Endothelial cell of umbilical vein (primary cell): ENCODE measurements at regions of chr5 and their contacts with region 1.

Region 1: DNA sequence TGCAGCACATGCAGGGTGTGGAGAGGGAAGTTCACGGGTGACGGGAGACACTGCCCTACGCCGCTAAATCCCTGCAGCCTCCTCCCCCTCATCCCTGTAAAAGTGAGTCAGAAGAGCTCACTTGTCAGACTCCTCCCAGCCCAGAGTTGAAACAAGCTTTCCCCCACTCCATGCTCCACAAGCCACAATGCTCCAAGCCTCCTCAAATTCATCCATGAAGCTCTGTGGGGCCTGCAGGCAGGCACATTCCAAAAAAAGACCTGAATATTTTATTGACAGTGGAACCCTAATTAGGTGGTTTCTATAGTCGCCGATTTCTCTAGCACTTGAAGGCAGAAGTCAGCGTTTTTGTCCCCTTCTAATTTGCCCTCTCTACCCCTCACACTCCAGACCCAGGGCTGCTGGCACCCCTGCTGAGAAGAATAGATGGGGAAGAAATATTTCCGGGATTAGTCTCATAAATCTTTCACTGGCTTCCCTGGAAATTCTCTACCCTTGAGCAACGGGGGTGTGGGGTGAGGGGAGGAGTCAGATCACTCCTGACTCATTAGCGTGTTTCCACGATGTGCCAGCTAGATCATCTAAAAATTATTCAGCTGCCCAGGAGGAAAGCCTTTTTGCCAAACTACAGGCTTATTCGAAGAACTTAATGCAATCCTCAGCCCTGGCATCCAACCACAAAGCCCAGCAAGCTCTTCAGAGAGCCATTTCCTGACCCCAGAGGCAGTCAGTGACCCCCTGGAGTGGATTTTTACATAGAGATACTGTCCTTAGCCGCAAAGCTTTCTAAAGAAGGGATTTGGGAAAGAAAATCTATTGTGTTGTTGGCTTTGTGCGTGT is 97.2 kb downstream of the ENC1 start:
- DNase-seq: peak; percentile 77
- H3K4me3 ChIP-seq: peak overlapping the region in 1 of 3 experiments; percentile 25
- H3K27ac ChIP-seq: peak overlapping the region; percentile 80
- H3K4me1 ChIP-seq: peaks cover 17% of the 10 kb centered on the region
- H3K27me3 ChIP-seq: no peaks in the 10 kb centered on the region
- CTCF ChIP-seq: no peak
- POLR2A ChIP-seq: peak; percentile 44

Region 2: DNA sequence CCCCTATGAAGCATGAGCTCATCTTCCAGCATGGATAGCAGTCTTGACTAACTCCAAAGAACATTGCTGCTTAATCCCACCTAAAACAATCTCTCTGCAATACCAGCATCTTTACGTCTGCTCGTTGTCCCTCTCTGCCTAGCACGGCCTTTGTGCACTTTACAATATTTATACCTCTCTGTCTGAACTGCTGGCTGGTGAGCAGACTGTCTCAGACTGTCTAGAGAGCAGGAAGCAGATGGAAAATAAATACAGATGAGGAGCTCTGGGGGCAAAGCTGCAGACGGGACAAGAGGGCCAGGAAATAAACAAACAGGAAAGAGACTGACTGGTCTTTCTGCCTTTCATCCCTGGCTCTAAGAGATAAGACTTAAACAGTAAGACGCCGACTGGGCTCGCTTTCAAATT is 127.7 kb before region 1 on chr5:
- CTCF ChIA-PET with region 1: interaction called, 4 read pairs
- POLR2A ChIA-PET with region 1: interaction called, 3 read pairs
- dilution Hi-C with region 1: no loop called
- intact Hi-C with region 1: loop called (anchors 5 kb)
- DNase-seq: peak; percentile 90
- H3K4me3 ChIP-seq: no peak overlapping the region
- H3K27ac ChIP-seq: peak overlapping the region; percentile 63
- H3K4me1 ChIP-seq: peaks cover 27% of the 10 kb centered on the region
- H3K27me3 ChIP-seq: no peaks in the 10 kb centered on the region
- CTCF ChIP-seq: no peak
- POLR2A ChIP-seq: peak; percentile 30

Region 3: GRCh38 chr5:74507370-74508005 is 35.9 kb before region 1 on chr5:
- CTCF ChIA-PET with region 1: no interaction called
- POLR2A ChIA-PET with region 1: no interaction called
- dilution Hi-C with region 1: no loop called
- intact Hi-C with region 1: no loop called
- DNase-seq: no peak
- H3K4me3 ChIP-seq: no peak overlapping the region
- H3K27ac ChIP-seq: no peak overlapping the region
- H3K4me1 ChIP-seq: peaks cover 6% of the 10 kb centered on the region
- H3K27me3 ChIP-seq: no peaks in the 10 kb centered on the region
- CTCF ChIP-seq: no peak
- POLR2A ChIP-seq: no peak

Region 4: DNA sequence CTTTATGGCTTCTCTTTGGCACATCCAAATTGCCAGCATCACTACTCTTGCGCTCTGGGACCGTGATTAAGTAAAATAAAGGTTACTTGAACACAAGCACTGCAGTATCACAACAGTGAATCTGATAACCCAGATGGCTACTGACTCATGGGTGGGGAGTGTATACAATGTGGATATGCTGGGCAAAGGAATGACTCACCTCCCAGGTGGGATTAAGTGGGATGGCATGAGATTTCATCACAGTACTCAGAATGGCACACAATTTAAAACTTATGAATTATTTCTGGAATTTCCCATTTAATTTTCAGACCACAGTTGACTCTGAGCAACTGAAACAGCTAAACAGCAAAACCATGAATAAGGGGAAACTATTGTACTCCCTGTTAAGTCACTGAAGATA is 219.2 kb after region 1 on chr5:
- CTCF ChIA-PET with region 1: no interaction called
- POLR2A ChIA-PET with region 1: no interaction called
- dilution Hi-C with region 1: no loop called
- intact Hi-C with region 1: no loop called
- DNase-seq: peak; percentile 33
- H3K4me3 ChIP-seq: no peak overlapping the region
- H3K27ac ChIP-seq: no peak overlapping the region
- H3K4me1 ChIP-seq: peaks cover 10% of the 10 kb centered on the region
- H3K27me3 ChIP-seq: no peaks in the 10 kb centered on the region
- CTCF ChIP-seq: no peak
- POLR2A ChIP-seq: no peak